Activated T-helper 1 cell treated with anti-CD3 and anti-CD28 coated beads, Interleukin-12 subunit alpha, Interleukin-12 subunit beta, Interleukin-2, Interleukin-4 antibody, amounts not matched to agents 30 ng/mL and 10 ng/mL and 1 ng/mL, durations not matched to agents 14 hours and 24 hours and 36 hours (primary cell): ENCODE measurements at regions of chr3 and their contacts with region 1.

Region 1: DNA sequence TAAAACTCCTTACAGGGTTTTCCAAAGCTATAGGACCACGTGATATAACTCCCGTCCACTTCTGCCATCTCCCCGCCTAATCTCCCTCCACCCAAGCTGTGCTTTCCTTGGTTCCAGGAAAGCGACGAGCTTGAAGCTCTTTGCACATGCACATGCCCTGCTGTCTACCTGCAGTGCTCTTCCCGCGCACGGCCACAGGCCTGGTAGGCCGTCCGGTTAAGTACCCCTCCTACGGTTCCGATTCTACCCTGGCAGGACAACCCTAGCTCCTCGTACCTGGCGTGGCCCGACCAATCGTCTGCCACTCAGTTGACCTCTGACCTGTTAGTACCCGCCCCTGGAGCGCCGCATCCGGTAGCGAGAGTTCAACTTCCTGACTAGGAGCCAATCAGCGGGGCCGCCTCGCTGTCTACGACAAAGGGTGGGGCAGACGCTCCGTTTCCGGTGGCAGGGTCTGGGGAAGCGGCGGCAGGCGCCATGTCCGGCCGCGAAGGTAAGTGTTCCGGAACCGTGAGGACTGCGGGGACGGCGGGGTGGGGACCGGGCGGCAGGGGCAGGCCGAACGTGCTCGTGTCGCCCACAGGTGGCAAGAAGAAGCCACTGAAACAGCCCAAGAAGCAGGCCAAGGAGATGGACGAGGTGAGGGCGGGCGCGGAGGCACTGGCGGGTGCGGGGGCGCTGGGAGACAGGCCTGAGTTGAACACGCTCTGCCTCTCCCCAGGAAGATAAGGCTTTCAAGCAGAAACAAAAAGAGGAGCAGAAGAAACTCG is at the starts of genes CCDC51 and TMA7:
- DNase-seq: peak; percentile 98
- H3K4me3 Mint-ChIP-seq: peak within 1 kb of the TSS; percentile 98
- H3K27ac Mint-ChIP-seq: peak within 1 kb of the TSS; percentile 94
- H3K4me1 Mint-ChIP-seq: peaks cover 26% of the 10 kb centered on the region
- H3K27me3 Mint-ChIP-seq: no peaks in the 10 kb centered on the region
- total RNA-seq, gene CCDC51: 26.0 and 26.3 TPM in 2 replicates
- total RNA-seq, gene TMA7: 262 and 266 TPM in 2 replicates

Region 2: GRCh38 chr3:48232734-48233133 is 207.3 kb before region 1 on chr3:
- intact Hi-C with region 1: loop called (anchors 1 kb)
- DNase-seq: peak; percentile 26
- H3K4me3 Mint-ChIP-seq: no peak overlapping the region
- H3K27ac Mint-ChIP-seq: no peak overlapping the region
- H3K4me1 Mint-ChIP-seq: peaks cover 10% of the 10 kb centered on the region
- H3K27me3 Mint-ChIP-seq: no peaks in the 10 kb centered on the region

Region 3: GRCh38 chr3:48268381-48269183 is 171.4 kb before region 1 on chr3:
- intact Hi-C with region 1: loop called (anchors 1 kb)
- DNase-seq: peak; percentile 74
- H3K4me3 Mint-ChIP-seq: peak overlapping the region; percentile 63
- H3K27ac Mint-ChIP-seq: peak overlapping the region; percentile 97
- H3K4me1 Mint-ChIP-seq: peaks cover 51% of the 10 kb centered on the region
- H3K27me3 Mint-ChIP-seq: no peaks in the 10 kb centered on the region

Region 4: DNA sequence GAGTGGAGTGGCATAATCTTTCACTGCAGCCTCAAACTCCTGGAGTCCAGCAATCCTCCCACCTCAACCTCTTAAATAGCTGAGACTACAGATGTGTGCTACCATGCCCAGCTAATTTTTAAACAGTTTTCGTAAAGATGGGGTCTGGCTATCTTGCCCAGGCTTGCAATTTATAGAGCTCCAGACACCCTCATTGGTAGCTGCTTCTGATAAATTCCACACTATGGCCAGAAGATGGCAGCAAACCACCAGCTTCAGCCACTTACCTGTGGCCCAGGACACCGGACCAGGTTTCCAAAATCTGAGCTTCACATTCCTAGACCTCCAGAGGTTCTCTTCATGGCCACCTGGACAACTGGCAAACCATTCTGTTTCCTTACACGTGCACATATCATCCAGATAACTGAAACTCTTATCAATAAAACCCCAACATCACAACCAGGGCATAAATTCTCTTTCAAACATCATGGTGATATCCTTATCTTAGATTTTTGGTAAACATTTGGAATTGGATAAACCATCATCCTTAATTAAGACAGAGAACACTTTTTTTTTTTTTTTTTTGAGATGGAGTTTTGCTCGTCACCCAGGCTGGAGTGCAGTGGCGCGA is 39.1 kb before region 1 on chr3:
- intact Hi-C with region 1: loop called (anchors 1 kb)
- DNase-seq: peak; percentile 44
- H3K4me3 Mint-ChIP-seq: no peak overlapping the region
- H3K27ac Mint-ChIP-seq: no peak overlapping the region
- H3K4me1 Mint-ChIP-seq: no peaks in the 10 kb centered on the region
- H3K27me3 Mint-ChIP-seq: no peaks in the 10 kb centered on the region

Region 5: DNA sequence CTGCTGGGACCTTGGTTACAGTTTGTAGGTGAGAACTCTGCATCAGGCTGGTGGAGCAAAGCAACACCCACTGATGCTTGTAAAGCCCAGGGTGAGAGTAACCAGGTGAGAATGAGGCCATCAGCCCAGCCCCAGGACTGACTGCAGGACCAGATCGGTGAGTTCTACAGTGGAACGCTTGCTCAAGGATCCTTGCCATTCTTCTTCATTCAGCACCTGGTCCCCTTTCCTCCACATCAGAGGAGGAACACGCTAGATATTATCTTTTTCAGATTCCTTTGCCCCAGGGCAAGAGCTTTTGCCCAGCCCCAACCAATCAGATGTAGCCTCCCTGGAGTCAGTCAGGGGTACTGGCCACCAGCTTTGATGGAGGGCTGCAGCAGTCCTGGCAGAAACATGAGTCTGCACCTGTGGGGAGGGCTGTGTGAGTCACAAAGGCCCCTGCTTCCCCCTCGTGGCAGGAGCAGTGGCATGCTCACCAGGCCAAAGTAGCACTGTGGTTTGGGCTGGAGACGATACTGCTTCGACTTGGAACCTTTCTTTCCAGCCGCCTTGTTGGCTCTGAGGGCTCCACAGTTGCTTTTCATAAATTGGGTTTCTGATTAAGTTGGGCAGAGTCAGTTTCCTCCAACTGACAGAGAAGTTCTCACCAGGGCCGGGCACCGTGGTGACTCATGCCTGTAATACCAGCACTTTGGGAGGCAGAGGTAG is 67.5 kb after region 1 on chr3:
- intact Hi-C with region 1: loop called (anchors 1 kb)
- DNase-seq: peak; percentile 51
- H3K4me3 Mint-ChIP-seq: peak overlapping the region; percentile 58
- H3K27ac Mint-ChIP-seq: peak overlapping the region; percentile 55
- H3K4me1 Mint-ChIP-seq: peaks cover 39% of the 10 kb centered on the region
- H3K27me3 Mint-ChIP-seq: peaks cover 3% of the 10 kb centered on the region

Region 6: GRCh38 chr3:48918388-48919214 is 478.6 kb after region 1 on chr3 and contains the start of gene ARIH2:
- intact Hi-C with region 1: no loop called
- DNase-seq: peak; percentile 87
- H3K4me3 Mint-ChIP-seq: peak within 1 kb of the TSS; percentile 92
- H3K27ac Mint-ChIP-seq: peak within 1 kb of the TSS; percentile 97
- H3K4me1 Mint-ChIP-seq: peaks cover 14% of the 10 kb centered on the region
- H3K27me3 Mint-ChIP-seq: no peaks in the 10 kb centered on the region
- total RNA-seq, gene ARIH2: 179 and 180 TPM in 2 replicates